A673 (cell line): ENCODE measurements at regions of chr5 and their contacts with region 1.

Region 1: DNA sequence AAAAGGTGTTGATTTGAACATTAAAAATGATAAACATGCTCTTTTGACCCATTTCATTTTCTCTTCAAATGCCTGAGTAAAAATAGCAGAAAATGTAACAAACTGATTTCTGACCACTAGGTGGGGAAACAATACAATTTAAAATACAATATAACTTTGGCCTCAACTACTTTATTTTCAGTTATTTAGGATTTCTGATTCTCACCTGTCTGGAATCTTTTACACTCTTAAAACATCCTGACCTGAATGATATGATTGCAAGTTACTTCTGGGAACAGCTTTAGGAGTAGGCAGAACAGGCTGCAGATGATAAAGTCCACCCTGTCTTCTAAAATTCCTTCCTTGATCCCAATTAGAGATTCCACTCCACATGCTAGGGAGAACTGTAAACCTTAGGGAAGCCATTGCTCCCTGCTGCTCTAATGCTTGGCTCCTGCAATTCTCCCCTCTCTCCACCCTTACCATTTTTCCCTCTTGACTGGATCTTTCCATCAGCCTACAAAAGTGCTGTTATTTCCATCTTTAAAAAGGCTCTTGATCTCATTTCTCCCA is 70.3 kb downstream of the FYB1 start:
- DNase-seq: peak; percentile 16
- H3K4me3 ChIP-seq: no peak overlapping the region
- H3K27ac ChIP-seq: no peak overlapping the region
- H3K4me1 ChIP-seq: no peaks in the 10 kb centered on the region
- H3K27me3 ChIP-seq: no peaks in the 10 kb centered on the region
- CTCF ChIP-seq: peak; percentile 41; the same call in 1 of the 2 replicates

Region 2: GRCh38 chr5:38291355-38291754 is 857.7 kb before region 1 on chr5:
- CTCF ChIA-PET with region 1: no interaction called
- POLR2A ChIA-PET with region 1: no interaction called
- intact Hi-C with region 1: no loop called
- DNase-seq: no peak
- H3K4me3 ChIP-seq: no peak overlapping the region
- H3K27ac ChIP-seq: no peak overlapping the region
- H3K4me1 ChIP-seq: no peaks in the 10 kb centered on the region
- H3K27me3 ChIP-seq: no peaks in the 10 kb centered on the region
- CTCF ChIP-seq: no peak

Region 3: GRCh38 chr5:39283231-39283818 is 134.3 kb after region 1 on chr5:
- CTCF ChIA-PET with region 1: no interaction called
- POLR2A ChIA-PET with region 1: no interaction called
- intact Hi-C with region 1: loop called (anchors 1 kb)
- DNase-seq: peak; percentile 59
- H3K4me3 ChIP-seq: no peak overlapping the region
- H3K27ac ChIP-seq: no peak overlapping the region
- H3K4me1 ChIP-seq: no peaks in the 10 kb centered on the region
- H3K27me3 ChIP-seq: no peaks in the 10 kb centered on the region
- CTCF ChIP-seq: peak; percentile 66

Region 4: DNA sequence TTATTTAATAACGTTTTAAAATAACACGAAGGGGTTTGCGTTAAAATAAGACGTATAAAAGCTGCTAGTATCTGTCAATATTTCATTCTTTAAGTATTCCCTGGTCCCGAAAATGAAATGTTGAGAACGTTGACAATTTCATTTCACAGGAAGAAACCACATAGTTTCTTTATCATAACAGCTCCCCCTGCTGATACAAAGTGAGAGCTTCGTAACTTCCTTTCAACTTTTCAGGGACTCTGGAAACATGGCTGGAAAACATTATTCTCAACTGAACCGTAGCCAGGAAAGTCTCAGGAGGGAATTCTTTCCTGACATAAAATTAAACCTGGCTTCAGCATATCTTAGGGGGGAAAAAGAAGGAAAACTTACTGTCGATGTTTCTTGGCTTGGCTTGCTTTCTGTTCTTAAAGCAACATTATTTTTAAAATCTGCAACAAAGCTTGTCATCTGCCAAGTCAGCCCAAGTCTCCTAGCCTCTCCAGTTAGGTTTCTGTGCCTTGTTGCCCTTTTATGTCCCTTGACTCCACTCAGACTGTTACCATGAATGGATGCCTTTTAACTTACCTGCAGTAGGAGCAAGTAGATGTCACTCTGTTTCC is 398.6 kb after region 1 on chr5:
- CTCF ChIA-PET with region 1: no interaction called
- POLR2A ChIA-PET with region 1: no interaction called
- intact Hi-C with region 1: loop called (anchors 10 kb)
- DNase-seq: peak; percentile 83
- H3K4me3 ChIP-seq: no peak overlapping the region
- H3K27ac ChIP-seq: no peak overlapping the region
- H3K4me1 ChIP-seq: peaks cover 8% of the 10 kb centered on the region
- H3K27me3 ChIP-seq: no peaks in the 10 kb centered on the region
- CTCF ChIP-seq: peak; percentile 84

Region 5: GRCh38 chr5:39570403-39571027 is 421.5 kb after region 1 on chr5:
- CTCF ChIA-PET with region 1: no interaction called
- POLR2A ChIA-PET with region 1: no interaction called
- intact Hi-C with region 1: loop called (anchors 2 kb)
- DNase-seq: peak; percentile 65
- H3K4me3 ChIP-seq: no peak overlapping the region
- H3K27ac ChIP-seq: no peak overlapping the region
- H3K4me1 ChIP-seq: no peaks in the 10 kb centered on the region
- H3K27me3 ChIP-seq: peaks cover 11% of the 10 kb centered on the region
- CTCF ChIP-seq: peak; percentile 70